Breast epithelium (tissue), 4 donors: ENCODE measurements at regions of chr9 and their contacts with region 1.

Region 1: GRCh38 chr9:90240541-90240940 is 402.1 kb downstream of the DIRAS2 start:
- DNase-seq: no peak
- H3K4me3 ChIP-seq: no peak overlapping the region
- H3K27ac ChIP-seq: no peak overlapping the region
- H3K4me1 ChIP-seq: no peaks in the 10 kb centered on the region
- H3K27me3 ChIP-seq: no peaks in the 10 kb centered on the region
- CTCF ChIP-seq: no peak
- POLR2A ChIP-seq: no peak

Region 2: GRCh38 chr9:90189306-90189705 is 51.2 kb before region 1 on chr9:
- intact Hi-C with region 1: no loop called
- DNase-seq: no peak
- H3K4me3 ChIP-seq: no peak overlapping the region
- H3K27ac ChIP-seq: no peak overlapping the region
- H3K4me1 ChIP-seq: no peaks in the 10 kb centered on the region
- H3K27me3 ChIP-seq: no peaks in the 10 kb centered on the region
- CTCF ChIP-seq: no peak
- POLR2A ChIP-seq: no peak

Region 3: DNA sequence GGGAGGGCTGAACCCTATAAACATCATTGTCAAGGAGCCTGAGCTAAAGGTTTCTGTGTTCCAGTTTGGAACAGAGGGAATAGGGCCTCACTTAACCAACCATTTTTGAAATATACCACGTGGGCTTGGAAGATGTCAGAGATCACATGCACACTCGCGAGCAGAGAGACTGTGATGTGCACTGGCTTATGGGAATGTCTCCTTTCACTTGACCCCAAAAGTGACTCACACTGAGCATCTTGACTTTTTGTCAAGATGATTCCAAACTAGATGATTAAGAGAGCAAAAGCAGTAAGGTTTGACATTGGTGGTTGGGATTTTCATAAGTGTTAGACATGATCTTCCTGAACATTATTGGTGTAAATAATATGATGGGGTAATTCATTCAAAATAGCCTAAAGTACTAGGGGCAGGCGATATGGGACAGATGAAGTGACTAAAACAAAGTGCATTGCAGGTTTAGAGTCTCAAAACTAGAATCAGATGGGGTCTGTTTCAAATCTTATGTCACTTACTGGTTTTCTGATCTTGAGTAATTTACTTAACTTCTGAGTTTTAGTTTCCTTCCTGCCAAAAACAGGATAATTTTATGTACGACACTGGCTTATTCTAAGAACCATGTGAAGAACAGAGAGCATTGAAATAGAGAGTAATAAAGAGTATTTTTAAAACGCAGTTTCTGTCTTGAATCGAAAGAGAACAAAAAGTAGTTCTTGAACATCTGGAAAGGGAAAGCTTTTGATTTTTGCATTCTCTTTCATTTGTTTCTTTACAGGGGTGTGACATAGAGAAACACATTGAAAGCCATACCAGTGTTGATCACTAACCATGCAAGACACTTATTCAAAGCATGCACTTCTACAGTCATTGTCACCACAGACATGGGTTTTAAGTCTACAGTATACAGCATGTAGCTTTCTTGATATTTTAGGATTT is 19.0 kb after region 1 on chr9:
- intact Hi-C with region 1: no loop called
- DNase-seq: no peak
- H3K4me3 ChIP-seq: no peak overlapping the region
- H3K27ac ChIP-seq: no peak overlapping the region
- H3K4me1 ChIP-seq: no peaks in the 10 kb centered on the region
- H3K27me3 ChIP-seq: no peaks in the 10 kb centered on the region
- CTCF ChIP-seq: no peak
- POLR2A ChIP-seq: no peak

Region 4: GRCh38 chr9:90271707-90272106 is 31.2 kb after region 1 on chr9:
- intact Hi-C with region 1: loop called (anchors 2 kb)
- DNase-seq: no peak
- H3K4me3 ChIP-seq: no peak overlapping the region
- H3K27ac ChIP-seq: no peak overlapping the region
- H3K4me1 ChIP-seq: no peaks in the 10 kb centered on the region
- H3K27me3 ChIP-seq: peaks cover 0 to 3% of the 10 kb centered on the region in 2 donors
- CTCF ChIP-seq: no peak
- POLR2A ChIP-seq: no peak

Region 5: DNA sequence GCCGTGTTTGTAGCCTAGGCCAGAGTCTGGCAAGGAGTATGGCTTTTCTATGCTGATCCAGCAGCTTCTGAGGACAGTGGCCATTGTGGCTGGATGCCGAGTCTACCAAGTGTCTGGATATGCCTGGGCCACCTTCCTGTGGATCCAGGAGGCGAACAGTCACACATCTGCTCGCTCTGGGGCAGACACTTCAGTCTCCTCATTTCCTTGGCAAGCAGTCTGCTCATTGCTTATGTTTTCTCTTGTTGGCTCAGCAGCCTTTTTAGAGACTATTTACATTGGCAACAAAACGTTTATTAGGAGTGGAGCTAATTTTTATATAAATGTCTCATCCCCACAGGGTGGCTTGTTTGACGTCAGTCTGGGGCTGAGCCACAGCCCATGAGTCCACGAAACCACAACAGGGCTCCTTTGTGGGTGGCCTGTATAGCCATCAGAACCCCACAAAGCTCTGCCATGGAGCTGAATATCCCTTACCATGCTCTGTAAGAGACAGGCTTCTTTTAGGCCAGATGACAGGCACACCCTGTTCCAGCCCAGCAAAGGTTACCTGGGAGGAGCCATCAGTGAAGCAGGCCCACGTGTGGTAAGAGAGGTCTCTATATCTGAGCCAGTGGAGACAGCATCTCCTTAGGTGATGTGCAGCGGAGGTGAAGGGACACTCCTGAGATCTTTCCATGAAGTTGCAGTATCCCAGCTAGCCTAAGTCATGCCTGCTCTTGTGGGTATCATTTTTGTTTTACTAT is 180.4 kb after region 1 on chr9:
- intact Hi-C with region 1: no loop called
- DNase-seq: peak in 1 of 2 donors; percentile 58
- H3K4me3 ChIP-seq: no peak overlapping the region
- H3K27ac ChIP-seq: peak overlapping the region; percentile 8 to 48
- H3K4me1 ChIP-seq: no peaks in the 10 kb centered on the region
- H3K27me3 ChIP-seq: no peaks in the 10 kb centered on the region
- CTCF ChIP-seq: no peak
- POLR2A ChIP-seq: no peak